ENCODE measurements at regions of chrX and their contacts with region 1.

Region 1: DNA sequence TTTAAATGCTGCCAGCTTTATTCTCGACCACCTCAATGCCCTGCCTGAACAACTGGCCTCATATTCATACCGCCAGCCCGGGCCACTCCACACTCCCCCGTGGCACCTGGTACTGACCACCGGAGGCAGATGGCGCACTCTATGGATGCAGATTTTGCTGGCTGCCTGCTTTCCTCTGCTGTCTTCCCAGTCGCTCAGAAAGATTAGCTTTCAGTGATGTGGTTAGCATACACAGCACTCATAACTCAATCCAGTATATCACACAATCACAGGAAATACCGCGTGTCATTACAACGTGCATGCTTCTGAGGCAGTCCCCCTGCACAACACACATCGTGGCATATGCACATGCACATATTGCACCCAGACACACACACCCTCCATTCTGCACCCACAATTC is 147.2 kb upstream of the BCOR start:
- DNase-seq: no peak
- ATAC-seq: peak in 3 of 4 donors; percentile 26 to 62 (median 51)
- H3K4me3 ChIP-seq: peak overlapping the region in 4 of 12 donors; percentile 10 to 24 (median 18)
- H3K27ac ChIP-seq: peak overlapping the region in 1 of 12 donors; percentile 9
- H3K4me1 ChIP-seq: peaks cover 0 to 7% (median 0%) of the 10 kb centered on the region in 12 donors
- H3K27me3 ChIP-seq: peaks cover 0 to 4% (median 0%) of the 10 kb centered on the region in 9 donors
- CTCF ChIP-seq: no peak
- POLR2A ChIP-seq: no peak

Region 2: DNA sequence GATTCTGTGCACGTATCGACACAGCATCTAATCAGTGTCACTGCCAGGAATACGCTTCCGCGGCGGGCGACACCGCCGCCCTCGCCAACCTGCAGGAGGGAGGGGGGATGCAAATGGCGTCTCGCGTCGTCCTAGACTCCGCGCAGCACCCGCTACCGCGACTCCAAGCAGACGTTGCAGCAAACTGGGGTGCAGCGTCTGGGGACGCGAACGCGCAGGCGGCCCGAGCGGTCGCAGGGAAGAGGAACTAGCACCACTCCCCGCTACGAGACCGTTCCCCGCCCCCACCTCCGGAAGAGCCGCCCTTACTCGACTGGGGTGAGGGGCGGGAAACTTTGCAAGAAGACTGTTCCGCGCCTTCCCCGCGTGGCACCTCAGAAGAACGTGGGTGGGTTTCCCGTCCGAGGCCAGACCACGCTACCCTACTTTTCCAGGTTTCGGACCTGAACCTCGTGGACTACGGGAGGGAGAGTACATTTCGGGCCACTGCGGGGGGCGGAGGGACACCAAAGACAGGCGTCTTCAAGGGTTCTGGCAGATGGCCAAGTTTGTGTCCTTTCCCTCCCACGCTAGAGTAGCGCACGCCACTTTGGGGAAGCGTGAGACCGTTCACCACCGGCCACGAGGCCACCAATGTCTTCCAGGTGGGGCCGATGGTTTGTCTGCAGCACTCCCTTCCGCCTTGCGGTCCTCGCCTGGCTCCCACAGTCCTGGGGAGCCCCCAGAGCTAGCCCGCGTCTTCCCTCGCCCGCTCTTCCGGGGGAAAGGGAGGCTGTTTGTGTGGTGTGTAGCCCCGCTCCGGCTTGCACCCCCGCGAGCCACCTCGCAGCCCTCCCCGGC is 69.2 kb before region 1 on chrX:
- intact Hi-C with region 1: loop called in 3 of 10 experiments (anchors 5 to 10 kb)
- DNase-seq: peak; percentile 78 to 88 (median 82)
- ATAC-seq: peak; percentile 40 to 66 (median 62)
- H3K4me3 ChIP-seq: peak overlapping the region; percentile 35 to 79 (median 60)
- H3K27ac ChIP-seq: peak overlapping the region; percentile 84 to 99 (median 94)
- H3K4me1 ChIP-seq: peaks cover 0 to 41% (median 20%) of the 10 kb centered on the region in 12 donors
- H3K27me3 ChIP-seq: peaks cover 0 to 78% (median 0%) of the 10 kb centered on the region in 9 donors
- CTCF ChIP-seq: no peak
- POLR2A ChIP-seq: peak in 1 of 2 donors; percentile 31

Region 3: DNA sequence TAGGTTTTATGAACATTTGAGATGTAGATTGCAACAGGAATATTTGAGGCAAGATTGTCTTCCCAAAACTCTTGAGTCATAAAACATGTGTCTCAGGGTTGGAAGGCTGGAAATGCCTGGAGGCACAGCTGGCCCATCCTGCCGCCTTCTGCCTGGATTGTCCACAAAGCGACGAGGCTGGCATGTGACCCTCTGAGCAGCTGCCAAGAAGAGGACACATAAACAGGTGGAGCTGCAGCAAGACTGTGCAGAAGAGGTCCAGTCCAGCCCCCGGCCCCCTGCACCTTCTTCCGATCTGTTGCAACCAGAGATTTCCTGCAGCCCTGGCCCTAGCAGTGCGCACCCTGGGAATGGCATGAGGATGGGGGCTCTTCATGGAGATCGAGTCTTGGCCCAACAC is 45.3 kb before region 1 on chrX:
- intact Hi-C with region 1: loop called in 1 of 10 experiments (anchors 10 kb)
- DNase-seq: no peak
- ATAC-seq: no peak
- H3K4me3 ChIP-seq: no peak overlapping the region
- H3K27ac ChIP-seq: no peak overlapping the region
- H3K4me1 ChIP-seq: no peaks in the 10 kb centered on the region
- H3K27me3 ChIP-seq: peaks cover 0 to 4% (median 0%) of the 10 kb centered on the region in 9 donors
- CTCF ChIP-seq: no peak
- POLR2A ChIP-seq: no peak